Cardiac septum (tissue), 1 donor: ENCODE measurements at regions of chr14 and their contacts with region 1.

Region 1: GRCh38 chr14:85528080-85528896 is 1.7 kb upstream of the FLRT2 start:
- DNase-seq: no peak

Region 2: DNA sequence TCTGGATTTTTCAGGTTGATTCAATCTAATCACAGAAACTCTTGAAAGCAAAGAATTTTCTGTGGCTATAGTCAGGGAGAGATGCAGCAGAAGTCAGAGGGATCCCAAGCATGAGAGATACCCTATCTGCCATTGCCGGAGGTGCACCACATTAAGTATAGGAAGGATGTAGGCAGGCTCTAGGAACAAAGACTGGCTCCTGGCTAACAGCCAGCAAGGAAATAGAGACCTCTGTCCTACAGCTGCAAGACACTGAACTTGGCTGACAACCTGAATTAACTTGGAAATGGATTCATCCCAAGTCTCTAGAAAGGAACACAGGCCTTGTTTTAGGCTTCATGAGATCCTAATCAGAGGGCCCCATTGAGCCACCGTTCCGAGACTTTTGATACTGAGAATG is 363.2 kb before region 1 on chr14:
- intact Hi-C with region 1: no loop called
- DNase-seq: no peak

Region 3: DNA sequence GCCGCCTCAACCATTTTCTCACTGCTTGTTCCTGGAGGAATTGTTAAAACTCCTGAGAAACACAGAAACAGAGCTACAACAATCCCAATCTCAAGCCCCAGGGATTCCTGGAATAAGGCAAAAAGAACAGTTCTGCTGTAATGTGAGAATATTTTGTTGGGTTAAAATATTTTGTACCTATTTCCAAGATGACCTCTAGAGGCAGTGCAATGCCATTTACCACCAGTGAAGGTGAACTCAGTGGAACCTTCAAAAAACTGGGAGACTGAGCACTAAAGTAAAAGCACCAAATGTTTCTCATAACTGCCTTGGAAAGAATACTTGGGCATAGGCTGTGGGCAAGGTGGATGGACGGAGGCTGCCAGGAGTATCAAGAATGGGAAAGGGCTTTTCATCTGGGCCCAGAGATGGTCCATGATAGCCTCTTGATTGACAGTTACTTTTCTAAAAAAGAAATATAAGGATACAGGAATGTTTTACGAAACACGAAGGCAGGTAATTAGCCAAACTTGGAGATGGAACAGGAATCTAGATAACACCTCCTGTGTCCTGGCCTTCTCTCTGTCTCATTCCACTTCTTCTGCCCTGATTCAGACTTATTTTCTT is 332.3 kb before region 1 on chr14:
- intact Hi-C with region 1: loop called (anchors 10 kb)
- DNase-seq: no peak

Region 4: DNA sequence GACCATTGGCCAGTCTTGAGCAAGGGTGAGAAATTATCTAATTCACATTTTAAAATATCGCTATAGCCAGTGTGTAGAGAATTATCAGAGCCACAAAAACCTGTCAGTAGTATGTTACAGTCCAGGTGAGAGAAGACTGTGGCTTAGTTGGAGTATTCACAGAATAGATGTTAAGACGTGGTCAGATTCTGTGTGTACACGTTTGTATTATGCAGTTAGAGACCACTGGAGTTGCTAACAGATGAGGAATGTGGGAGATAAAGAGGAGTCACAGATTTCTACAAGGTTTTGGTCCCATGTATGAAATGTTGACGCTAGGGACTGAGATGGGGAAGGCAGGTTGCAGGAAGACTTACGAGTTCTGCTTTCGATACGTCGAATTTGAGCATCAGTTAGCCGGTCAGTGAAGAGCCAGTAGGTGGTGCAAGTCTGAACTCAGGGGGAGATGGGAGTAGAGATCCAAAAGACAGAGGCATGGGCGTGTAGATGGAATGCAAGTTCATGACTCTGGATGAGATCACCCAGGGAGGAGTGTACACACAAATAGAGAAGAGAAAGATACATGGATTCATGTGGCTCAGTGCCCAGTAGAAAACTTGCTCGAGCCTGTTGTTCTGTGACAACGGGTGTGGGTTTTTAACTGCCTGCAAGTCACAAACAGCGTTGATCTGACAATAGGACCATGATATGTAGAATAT is 113.1 kb before region 1 on chr14:
- intact Hi-C with region 1: loop called (anchors 5 kb)
- DNase-seq: no peak

Region 5: DNA sequence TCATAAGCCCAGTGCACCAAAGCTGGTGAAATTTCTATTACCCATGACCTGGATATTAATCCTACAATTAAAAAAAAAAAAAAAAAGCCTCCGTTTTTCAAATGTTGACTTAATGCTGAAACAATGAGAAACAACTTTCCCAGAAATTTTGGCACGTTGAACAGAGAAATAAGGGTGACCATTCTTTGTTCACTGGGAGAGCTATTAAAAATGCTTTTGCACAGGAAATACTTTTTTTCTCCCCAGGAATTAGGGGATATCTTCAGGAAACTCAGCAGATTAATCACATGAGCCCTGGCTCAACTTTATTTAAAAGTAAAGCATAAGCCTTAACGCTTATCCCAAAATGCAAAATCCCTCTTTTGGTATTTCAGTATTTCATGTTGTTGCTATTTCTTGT is 53.2 kb before region 1 on chr14:
- intact Hi-C with region 1: loop called (anchors 5 kb)
- DNase-seq: no peak